A673 (cell line): ENCODE measurements at regions of chr3 and their contacts with region 1.

Region 1: GRCh38 chr3:178385280-178385952 is 150.8 kb upstream of the KCNMB2 start:
- DNase-seq: peak; percentile 64
- H3K4me3 ChIP-seq: no peak overlapping the region
- H3K27ac ChIP-seq: no peak overlapping the region
- H3K4me1 ChIP-seq: peaks cover 14% of the 10 kb centered on the region
- H3K27me3 ChIP-seq: no peaks in the 10 kb centered on the region
- CTCF ChIP-seq: peak; percentile 92

Region 2: GRCh38 chr3:177448987-177449975 is 936.1 kb before region 1 on chr3:
- CTCF ChIA-PET with region 1: no interaction called
- POLR2A ChIA-PET with region 1: no interaction called
- intact Hi-C with region 1: loop called (anchors 10 kb)
- DNase-seq: peak; percentile 64
- H3K4me3 ChIP-seq: no peak overlapping the region
- H3K27ac ChIP-seq: peak overlapping the region; percentile 71
- H3K4me1 ChIP-seq: peaks cover 64% of the 10 kb centered on the region
- H3K27me3 ChIP-seq: no peaks in the 10 kb centered on the region
- CTCF ChIP-seq: no peak

Region 3: DNA sequence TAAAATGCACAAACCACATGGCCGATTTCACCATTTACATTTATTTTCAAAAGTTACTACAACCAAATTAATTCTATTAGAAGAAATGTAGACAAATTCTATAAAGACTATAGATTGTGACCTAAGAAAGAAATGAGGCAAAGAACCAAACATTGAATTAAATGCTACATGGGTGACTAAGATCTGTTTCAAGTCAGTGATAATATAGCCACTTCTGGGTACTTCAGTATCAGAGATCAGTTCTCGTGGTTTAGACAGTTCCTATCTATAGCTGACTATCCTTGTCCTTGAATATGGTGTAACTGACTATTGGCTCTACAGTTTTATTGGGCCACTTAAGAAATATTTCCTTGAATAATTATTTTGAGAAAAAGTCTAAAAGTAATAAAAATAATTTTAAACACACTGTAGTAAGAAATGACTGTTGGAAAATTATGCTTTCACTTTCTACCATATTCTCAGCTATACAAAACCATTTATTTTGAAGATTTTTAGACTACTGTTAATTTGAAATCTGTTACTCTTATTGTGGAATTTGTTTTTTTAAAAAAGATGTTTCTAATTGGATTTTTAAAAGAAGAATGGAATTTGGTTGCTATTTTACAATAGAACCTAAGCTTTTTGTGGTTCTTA is 851.4 kb after region 1 on chr3:
- CTCF ChIA-PET with region 1: no interaction called
- POLR2A ChIA-PET with region 1: no interaction called
- intact Hi-C with region 1: no loop called
- DNase-seq: no peak
- H3K4me3 ChIP-seq: no peak overlapping the region
- H3K27ac ChIP-seq: no peak overlapping the region
- H3K4me1 ChIP-seq: peaks cover 8% of the 10 kb centered on the region
- H3K27me3 ChIP-seq: no peaks in the 10 kb centered on the region
- CTCF ChIP-seq: no peak